Activated CD4-positive, alpha-beta T cell treated with anti-CD3 and anti-CD28 coated beads for 36 hours (primary cell): ENCODE measurements at regions of chr18 and their contacts with region 1.

Region 1: GRCh38 chr18:62714671-62715435 is 488 bp upstream of the PHLPP1 start:
- DNase-seq: peak; percentile 95
- ATAC-seq: peak; percentile 81
- H3K4me3 Mint-ChIP-seq: peak overlapping the region; percentile 81
- H3K27ac Mint-ChIP-seq: peak overlapping the region; percentile 69
- H3K4me1 Mint-ChIP-seq: peaks cover 28% of the 10 kb centered on the region
- H3K27me3 Mint-ChIP-seq: no peaks in the 10 kb centered on the region

Region 2: DNA sequence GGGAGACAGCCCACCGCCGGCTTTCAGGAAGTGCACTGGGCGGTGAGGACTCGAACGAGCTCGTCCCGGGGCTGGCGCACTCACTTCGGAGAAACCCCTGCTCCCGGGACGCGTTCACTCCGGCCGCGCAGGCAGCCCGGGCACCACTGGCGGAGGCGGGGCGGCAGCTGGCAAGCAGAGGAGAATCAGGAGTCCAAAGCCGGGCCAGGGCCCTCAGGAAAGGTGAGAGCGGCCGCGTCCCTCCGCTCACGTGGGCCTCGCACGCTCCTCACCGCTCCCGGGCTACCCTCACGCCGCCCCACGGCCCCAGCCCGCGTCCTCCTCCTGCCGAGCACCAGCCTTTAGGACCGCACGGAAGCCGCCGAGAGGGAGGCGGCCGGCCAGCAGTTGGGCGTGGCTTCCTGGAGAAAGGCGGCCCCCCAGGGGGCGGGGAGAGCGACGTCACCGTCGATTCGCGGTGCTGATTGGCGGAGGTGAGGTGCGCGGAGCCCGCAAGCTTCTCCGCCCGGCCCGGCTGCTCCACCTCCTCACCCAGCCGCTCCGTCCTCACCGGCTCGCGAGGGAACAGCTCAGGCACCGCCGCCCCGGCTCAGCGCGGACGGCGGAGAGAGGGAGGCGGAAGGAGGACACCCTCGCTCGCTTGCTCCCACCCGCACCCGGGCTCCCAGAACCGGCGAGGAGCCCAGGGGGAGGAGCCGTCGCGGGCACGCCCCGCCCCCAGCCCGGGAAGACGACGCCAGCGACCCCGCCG is 192.2 kb before region 1 on chr18 and contains the start of gene ZCCHC2:
- CTCF ChIA-PET with region 1: no interaction called
- POLR2A ChIA-PET with region 1: no interaction called
- intact Hi-C with region 1: loop called (anchors 1 to 5 kb)
- DNase-seq: peak; percentile 99
- ATAC-seq: peak; percentile 82
- H3K4me3 Mint-ChIP-seq: peak within 1 kb of the TSS; percentile 95
- H3K27ac Mint-ChIP-seq: peak within 1 kb of the TSS; percentile 94
- H3K4me1 Mint-ChIP-seq: peaks cover 19% of the 10 kb centered on the region
- H3K27me3 Mint-ChIP-seq: no peaks in the 10 kb centered on the region
- total RNA-seq, gene ZCCHC2: 26.1 to 40.1 TPM

Region 3: GRCh38 chr18:62784966-62785413 is 70.1 kb after region 1 on chr18:
- CTCF ChIA-PET with region 1: interaction called, 4 read pairs
- POLR2A ChIA-PET with region 1: interaction called, 3 read pairs
- intact Hi-C with region 1: loop called (anchors 1 to 2 kb)
- DNase-seq: no peak
- ATAC-seq: peak; percentile 42
- H3K4me3 Mint-ChIP-seq: no peak overlapping the region
- H3K27ac Mint-ChIP-seq: no peak overlapping the region
- H3K4me1 Mint-ChIP-seq: peaks cover 55% of the 10 kb centered on the region
- H3K27me3 Mint-ChIP-seq: peaks cover 3% of the 10 kb centered on the region

Region 4: DNA sequence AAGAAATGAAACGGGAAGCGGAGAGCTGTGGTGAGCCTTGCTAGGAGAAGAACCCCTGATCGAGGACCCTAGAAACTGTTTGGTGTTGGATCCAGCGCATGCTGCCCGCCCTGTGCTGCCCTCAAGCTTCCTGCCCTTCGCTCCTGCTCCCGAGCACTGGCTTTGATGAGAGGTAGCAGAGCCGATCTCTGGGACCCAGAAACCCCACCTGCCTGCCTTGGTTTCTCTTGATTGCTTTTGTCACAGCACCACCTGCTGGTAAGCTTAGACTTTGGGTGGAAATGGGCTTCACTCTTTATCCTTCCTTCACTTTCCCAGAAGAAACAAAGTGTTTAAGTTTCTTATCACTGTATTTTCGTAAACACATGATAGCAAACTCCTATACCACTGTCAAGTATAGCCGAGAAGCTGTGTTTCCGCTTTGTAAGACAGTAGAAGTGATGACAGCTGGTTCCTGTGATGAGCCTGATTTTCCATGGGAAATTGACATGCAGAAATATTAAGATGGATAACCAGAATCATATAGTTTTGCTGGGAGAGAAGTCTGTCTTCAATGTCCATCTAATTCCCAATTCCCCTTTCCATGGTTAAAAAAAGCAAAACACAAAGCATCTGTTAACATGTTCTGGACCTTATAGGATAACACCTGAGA is 267.9 kb after region 1 on chr18:
- CTCF ChIA-PET with region 1: interaction called, 21 read pairs
- POLR2A ChIA-PET with region 1: no interaction called
- intact Hi-C with region 1: loop called (anchors 1 kb)
- DNase-seq: peak; percentile 74
- ATAC-seq: peak; percentile 72
- H3K4me3 Mint-ChIP-seq: no peak overlapping the region
- H3K27ac Mint-ChIP-seq: no peak overlapping the region
- H3K4me1 Mint-ChIP-seq: peaks cover 3% of the 10 kb centered on the region
- H3K27me3 Mint-ChIP-seq: no peaks in the 10 kb centered on the region

Region 5: DNA sequence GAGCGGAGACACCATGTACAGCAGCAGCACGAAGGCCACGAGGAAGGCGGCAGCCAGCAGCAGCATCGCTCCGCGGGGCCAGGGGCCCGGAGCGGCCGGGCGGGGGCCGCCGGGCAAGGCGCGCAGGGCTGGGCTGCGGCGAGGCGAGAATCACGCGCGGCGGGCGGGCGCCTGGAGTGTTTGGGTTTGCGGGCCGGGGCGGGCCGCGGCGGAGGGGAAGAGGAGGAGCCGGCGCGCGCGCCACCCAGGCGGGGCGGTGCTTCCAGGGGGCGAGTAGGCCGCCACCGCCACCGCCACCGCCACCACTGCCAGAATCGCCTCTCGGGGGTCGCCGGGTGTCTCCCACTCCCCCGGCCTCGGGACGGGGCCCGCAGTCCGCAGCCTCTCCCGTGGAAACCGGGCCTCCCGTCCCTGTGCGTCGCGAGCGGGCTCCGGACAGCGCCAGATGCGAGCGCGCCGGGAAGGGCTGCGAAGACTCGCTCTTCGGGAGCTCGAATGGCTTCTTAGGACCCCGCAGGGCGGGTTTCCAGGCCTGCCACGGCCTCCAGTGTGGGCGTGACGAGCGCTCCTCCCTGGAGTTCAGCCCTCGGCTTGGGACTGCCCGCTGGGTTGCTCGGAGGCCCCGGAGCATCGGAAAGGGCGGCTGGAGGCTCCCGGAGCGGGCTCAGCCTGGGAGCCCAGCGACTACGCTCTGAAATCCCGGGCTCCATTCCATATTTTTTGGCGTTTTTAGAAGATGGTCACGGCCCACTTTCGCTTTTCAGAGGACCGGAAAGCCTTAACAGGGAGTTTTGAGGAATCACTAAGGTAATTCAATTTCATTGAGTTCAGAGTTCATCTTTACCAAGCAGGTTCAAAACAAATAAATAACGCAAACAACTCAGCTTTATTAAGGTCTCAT is 652.5 kb after region 1 on chr18 and contains the start of gene KDSR:
- CTCF ChIA-PET with region 1: no interaction called
- POLR2A ChIA-PET with region 1: interaction called, 5 read pairs
- intact Hi-C with region 1: loop called in 1 of 2 experiments (anchors 2 kb)
- DNase-seq: peak; percentile 92
- ATAC-seq: peak; percentile 85
- H3K4me3 Mint-ChIP-seq: peak within 1 kb of the TSS; percentile 96
- H3K27ac Mint-ChIP-seq: peak within 1 kb of the TSS; percentile 85
- H3K4me1 Mint-ChIP-seq: peaks cover 36% of the 10 kb centered on the region
- H3K27me3 Mint-ChIP-seq: no peaks in the 10 kb centered on the region
- total RNA-seq, gene KDSR: 72.6 to 78.6 TPM